Heart right ventricle (tissue), 16 donors: ENCODE measurements at regions of chr7 and their contacts with region 1.

Region 1: GRCh38 chr7:34523226-34523918 is 134.6 kb upstream of the NPSR1 start:
- DNase-seq: no peak
- ATAC-seq: no peak
- H3K4me3 ChIP-seq: no peak overlapping the region
- H3K27ac ChIP-seq: no peak overlapping the region
- H3K4me1 ChIP-seq: no peaks in the 10 kb centered on the region
- H3K27me3 ChIP-seq: no peaks in the 10 kb centered on the region
- CTCF ChIP-seq: no peak

Region 2: GRCh38 chr7:34107276-34107675 is 416.1 kb before region 1 on chr7:
- intact Hi-C with region 1: loop called in 1 of 10 experiments (anchors 10 kb)
- DNase-seq: peak in 1 of 2 donors; percentile 54
- ATAC-seq: peak in 7 of 8 donors; percentile 25 to 74 (median 68)
- H3K4me3 ChIP-seq: no peak overlapping the region
- H3K27ac ChIP-seq: peak overlapping the region in 1 of 10 donors; percentile 49
- H3K4me1 ChIP-seq: peaks cover 0 to 15% (median 3%) of the 10 kb centered on the region in 9 donors
- H3K27me3 ChIP-seq: no peaks in the 10 kb centered on the region
- CTCF ChIP-seq: no peak